CD14-positive monocyte (primary cell): ENCODE measurements at regions of chr1 and their contacts with region 1.

Region 1: GRCh38 chr1:173867753-173868265 is at the start of gene GAS5:
- DNase-seq: peak; percentile 96 to 98 (median 98)
- H3K4me3 ChIP-seq: peak within 1 kb of the TSS; percentile 89 to 96 (median 94)
- H3K4me3 Mint-ChIP-seq: peak within 1 kb of the TSS; percentile 98 to 99
- H3K27ac ChIP-seq: peak within 1 kb of the TSS; percentile 86 to 91
- H3K27ac Mint-ChIP-seq: peak within 1 kb of the TSS; percentile 91 to 97 (median 96)
- H3K4me1 ChIP-seq: peaks cover 22 to 32% of the 10 kb centered on the region in 2 donors
- H3K4me1 Mint-ChIP-seq: peaks cover 50% of the 10 kb centered on the region
- H3K27me3 ChIP-seq: no peaks in the 10 kb centered on the region
- H3K27me3 Mint-ChIP-seq: peaks cover 0 to 2% (median 0%) of the 10 kb centered on the region in 3 donors
- CTCF ChIP-seq: no peak
- polyA plus RNA-seq, gene GAS5: 90.4 to 309 (median 92.0) TPM

Region 2: DNA sequence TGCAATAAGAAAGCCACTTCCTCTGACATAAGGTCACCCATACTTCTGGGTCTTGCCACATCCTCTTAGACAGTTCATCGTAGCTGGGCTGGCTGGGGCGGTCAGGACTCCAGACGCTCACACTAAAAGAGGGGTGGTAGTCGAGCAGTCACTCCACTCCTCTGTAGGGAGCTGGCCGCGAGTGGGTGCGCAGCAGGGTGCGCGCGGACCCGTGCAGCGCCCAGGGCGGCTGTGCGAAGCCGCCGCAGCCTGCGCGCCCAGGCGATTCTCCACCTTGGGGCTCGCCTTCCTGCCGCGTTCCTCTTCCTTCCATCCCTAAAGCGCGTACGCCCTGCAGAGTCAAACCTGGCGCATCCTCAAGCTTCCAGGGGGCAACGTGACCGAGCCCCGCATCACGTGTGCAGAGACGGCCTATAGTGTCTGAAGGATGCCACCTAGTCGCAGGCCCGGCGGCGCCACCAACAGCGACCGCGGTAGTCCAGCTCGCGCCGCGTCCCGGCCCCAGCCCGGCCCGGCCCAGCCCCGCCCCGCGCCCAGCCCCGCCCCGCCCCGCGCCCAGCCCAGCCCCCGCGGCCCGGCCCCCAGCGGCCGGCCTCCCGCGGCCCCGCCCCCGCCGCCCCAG is 391.0 kb before region 1 on chr1:
- intact Hi-C with region 1: loop called (anchors 5 to 10 kb)
- DNase-seq: peak; percentile 84 to 88 (median 87)
- H3K4me3 ChIP-seq: peak overlapping the region; percentile 77 to 92 (median 86)
- H3K4me3 Mint-ChIP-seq: peak overlapping the region; percentile 92 to 93
- H3K27ac ChIP-seq: peak overlapping the region; percentile 84 to 97
- H3K27ac Mint-ChIP-seq: peak overlapping the region; percentile 94 to 98 (median 97)
- H3K4me1 ChIP-seq: peaks cover 37 to 45% of the 10 kb centered on the region in 2 donors
- H3K4me1 Mint-ChIP-seq: peaks cover 52% of the 10 kb centered on the region
- H3K27me3 ChIP-seq: no peaks in the 10 kb centered on the region
- H3K27me3 Mint-ChIP-seq: peaks cover 0 to 4% (median 1%) of the 10 kb centered on the region in 3 donors
- CTCF ChIP-seq: no peak

Region 3: DNA sequence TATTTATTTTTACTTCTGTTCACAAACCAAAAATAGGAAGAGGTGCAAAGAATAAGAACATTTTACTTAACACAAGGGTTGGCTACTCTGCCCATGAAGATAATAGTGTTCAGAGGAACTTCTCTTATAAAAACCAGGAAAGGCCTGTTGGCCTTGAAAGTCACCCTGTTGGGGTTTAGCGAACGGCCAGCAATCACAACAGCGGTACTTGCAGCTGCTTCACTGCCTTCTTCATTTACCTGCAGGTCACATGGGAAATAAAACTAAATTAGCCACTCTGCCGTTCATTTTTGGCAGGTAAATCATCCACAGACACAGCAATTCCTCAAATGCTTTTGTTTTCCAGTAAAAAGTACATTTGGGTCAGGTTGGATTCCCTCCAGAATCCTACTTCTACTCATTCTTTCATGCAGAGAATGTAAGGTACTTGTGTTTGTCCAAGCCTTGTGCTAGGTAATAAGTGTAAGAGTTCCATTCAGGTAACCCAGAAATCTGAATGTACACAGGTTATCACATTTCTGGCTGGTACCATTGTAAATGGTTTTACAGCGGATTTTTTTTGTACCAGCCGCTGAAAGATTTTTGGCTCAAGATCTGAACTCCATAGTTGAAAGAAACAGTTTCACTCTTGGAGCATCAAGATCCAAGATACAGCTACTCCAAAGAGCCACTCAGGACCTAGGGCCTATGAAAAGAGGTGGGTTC is 36.2 kb after region 1 on chr1:
- intact Hi-C with region 1: no loop called
- DNase-seq: no peak
- H3K4me3 ChIP-seq: no peak overlapping the region
- H3K4me3 Mint-ChIP-seq: no peak overlapping the region
- H3K27ac ChIP-seq: no peak overlapping the region
- H3K27ac Mint-ChIP-seq: no peak overlapping the region
- H3K4me1 ChIP-seq: no peaks in the 10 kb centered on the region
- H3K4me1 Mint-ChIP-seq: peaks cover 6% of the 10 kb centered on the region
- H3K27me3 ChIP-seq: no peaks in the 10 kb centered on the region
- H3K27me3 Mint-ChIP-seq: no peaks in the 10 kb centered on the region
- CTCF ChIP-seq: no peak

Region 4: DNA sequence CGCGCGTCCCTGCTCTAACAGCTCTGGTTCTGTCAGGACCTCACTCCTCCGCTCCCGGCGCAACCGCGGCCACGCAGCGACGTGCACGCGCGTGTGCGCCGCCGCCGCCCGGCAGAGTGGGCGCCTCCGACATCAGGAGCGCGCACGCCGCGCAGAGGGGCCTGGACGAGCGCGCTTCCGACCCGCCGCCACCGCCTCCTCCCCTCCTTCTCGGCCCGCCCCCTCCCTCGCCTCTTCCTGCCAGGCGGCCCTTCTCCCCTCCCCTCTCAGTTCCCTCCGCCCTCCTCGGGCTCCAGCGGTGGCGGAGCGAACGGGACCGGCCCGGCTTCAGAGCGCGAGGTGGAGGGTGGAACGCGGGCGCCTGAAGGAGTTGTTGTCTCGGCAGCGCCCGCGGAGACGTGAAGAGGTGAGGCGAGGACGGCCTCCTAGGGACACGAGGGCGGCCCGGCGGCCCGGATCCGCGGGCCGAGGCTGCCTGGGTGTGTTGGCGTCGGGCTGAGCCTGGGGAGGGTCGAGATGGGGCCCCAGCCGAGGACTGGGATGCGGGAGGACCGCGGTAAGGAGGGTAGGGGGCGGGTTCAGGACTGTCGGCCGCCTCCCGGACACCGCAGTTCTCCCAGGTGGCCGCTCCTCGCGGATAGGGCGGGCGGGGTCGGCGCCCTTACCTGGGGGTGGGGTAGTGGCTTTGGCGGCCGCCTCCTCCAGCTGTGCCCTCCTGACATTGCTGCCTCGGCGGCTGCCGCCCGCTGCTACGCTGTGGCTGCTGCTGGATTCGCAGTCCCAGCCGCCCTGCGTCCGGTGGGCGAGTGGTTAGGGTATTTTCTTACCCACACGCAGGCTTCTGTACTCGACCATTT is 291.7 kb after region 1 on chr1 and contains the start of gene RABGAP1L:
- intact Hi-C with region 1: loop called in 1 of 2 experiments (anchors 10 kb)
- DNase-seq: peak; percentile 86 to 91 (median 86)
- H3K4me3 ChIP-seq: peak within 1 kb of the TSS; percentile 49 to 89 (median 79)
- H3K4me3 Mint-ChIP-seq: peak within 1 kb of the TSS; percentile 95 to 99
- H3K27ac ChIP-seq: peak within 1 kb of the TSS; percentile 43 to 80
- H3K27ac Mint-ChIP-seq: peak within 1 kb of the TSS; percentile 71 to 92 (median 83)
- H3K4me1 ChIP-seq: peaks cover 12 to 20% of the 10 kb centered on the region in 2 donors
- H3K4me1 Mint-ChIP-seq: peaks cover 30% of the 10 kb centered on the region
- H3K27me3 ChIP-seq: no peaks in the 10 kb centered on the region
- H3K27me3 Mint-ChIP-seq: no peaks in the 10 kb centered on the region
- CTCF ChIP-seq: no peak
- polyA plus RNA-seq, gene RABGAP1L: 35.2 to 75.3 (median 63.3) TPM